OCI-LY7 (cell line): ENCODE measurements at regions of chr1 and their contacts with region 1.

Region 1: DNA sequence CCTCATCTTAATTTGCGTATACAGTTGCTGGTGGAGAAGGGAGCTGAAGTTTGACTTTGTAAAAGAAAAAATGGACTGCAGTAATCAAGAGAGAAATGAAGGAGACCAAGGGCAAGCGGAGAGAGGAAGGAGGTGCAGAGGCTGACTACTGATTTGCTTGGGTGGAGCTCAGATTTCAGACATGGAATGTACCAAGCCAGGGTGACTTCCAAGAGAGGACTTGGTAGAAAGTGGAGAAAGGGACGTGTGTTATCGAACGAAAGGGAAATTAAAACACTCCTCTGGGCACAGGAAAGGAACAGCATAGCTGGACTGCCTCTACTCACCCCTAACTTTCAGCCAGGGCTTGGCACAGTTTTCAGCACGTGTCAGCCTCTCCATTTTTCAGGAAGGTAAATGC is 15.1 kb upstream of the HEATR1 start:
- DNase-seq: no peak
- H3K4me3 ChIP-seq: no peak overlapping the region
- H3K27ac ChIP-seq: no peak overlapping the region
- H3K4me1 ChIP-seq: no peaks in the 10 kb centered on the region
- CTCF ChIP-seq: no peak

Region 2: DNA sequence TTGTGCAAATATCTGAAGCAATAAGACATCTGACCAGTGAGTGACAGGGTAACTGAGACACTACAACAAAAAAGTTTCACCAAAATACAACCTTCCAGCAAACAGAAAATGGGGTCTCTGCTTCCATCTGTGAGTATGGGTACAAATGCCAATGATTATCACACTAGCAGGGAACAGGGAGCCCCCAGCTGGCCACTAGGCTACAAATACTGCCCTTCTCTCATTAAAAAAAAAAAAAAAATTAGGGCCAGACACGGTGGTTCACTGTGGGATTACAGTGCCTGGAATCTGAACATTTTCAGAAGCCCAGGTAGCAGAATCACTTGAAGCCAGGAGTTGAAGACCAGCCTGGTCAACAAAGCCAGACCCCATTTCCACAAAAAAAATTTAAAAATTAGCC is 273.7 kb before region 1 on chr1:
- CTCF ChIA-PET with region 1: no interaction called
- POLR2A ChIA-PET with region 1: no interaction called
- intact Hi-C with region 1: no loop called
- DNase-seq: peak; percentile 20
- H3K4me3 ChIP-seq: no peak overlapping the region
- H3K27ac ChIP-seq: no peak overlapping the region
- H3K4me1 ChIP-seq: no peaks in the 10 kb centered on the region
- CTCF ChIP-seq: peak; percentile 56

Region 3: DNA sequence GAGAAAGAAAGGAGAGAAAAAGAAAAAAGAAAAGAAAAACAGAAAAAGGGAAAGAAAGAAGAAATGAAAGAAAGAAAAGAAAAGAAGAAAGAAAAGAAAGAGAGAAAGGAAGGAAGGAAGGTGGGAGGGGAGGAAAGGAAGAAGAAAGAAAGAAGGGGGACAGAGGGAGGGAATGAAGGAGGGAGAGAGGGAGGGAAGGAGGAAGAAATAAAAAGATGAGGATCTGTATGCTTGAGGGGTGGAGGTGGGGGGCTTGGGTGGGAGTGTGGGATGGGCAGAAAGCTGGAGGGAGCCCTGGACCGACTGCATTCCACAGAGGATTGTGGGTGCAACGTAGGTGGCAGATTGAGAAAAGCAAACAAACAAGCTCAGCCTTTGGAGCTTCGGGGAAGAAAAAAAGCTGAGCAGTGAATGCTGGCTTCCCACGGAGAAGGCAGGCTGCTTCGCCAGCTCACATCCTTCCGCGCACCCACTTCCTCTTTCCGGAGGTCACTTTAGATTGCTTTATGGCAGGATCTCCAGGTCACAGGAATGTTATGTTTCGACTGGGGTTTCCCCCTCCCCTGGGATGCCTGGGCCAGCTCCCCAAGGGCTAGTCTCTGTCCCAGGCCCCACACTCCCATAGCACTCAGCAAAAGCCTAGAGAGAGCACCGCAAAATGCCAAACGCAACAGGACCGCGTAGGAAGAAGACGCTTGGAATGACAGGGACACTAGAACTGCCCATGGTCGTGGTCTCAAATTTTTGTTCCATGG is 116.3 kb before region 1 on chr1:
- CTCF ChIA-PET with region 1: no interaction called
- POLR2A ChIA-PET with region 1: interaction called, 10 read pairs
- intact Hi-C with region 1: no loop called
- DNase-seq: no peak
- H3K4me3 ChIP-seq: no peak overlapping the region
- H3K27ac ChIP-seq: no peak overlapping the region
- H3K4me1 ChIP-seq: no peaks in the 10 kb centered on the region
- CTCF ChIP-seq: no peak